Calu3 (cell line): ENCODE measurements at regions of chr1 and their contacts with region 1.

Region 1: GRCh38 chr1:231407547-231408396 is 14.3 kb downstream of the EGLN1 start:
- DNase-seq: no peak
- H3K4me3 Mint-ChIP-seq: no peak overlapping the region
- H3K27ac Mint-ChIP-seq: no peak overlapping the region
- H3K4me1 Mint-ChIP-seq: peaks cover 13% of the 10 kb centered on the region
- H3K27me3 Mint-ChIP-seq: no peaks in the 10 kb centered on the region
- CTCF ChIP-seq: no peak

Region 2: GRCh38 chr1:231395076-231395995 is 12.4 kb before region 1 on chr1:
- CTCF ChIA-PET with region 1: no interaction called
- intact Hi-C with region 1: loop called (anchors 2 kb)
- DNase-seq: peak; percentile 47
- H3K4me3 Mint-ChIP-seq: peak overlapping the region; percentile 50
- H3K27ac Mint-ChIP-seq: peak overlapping the region; percentile 78
- H3K4me1 Mint-ChIP-seq: peaks cover 82% of the 10 kb centered on the region
- H3K27me3 Mint-ChIP-seq: no peaks in the 10 kb centered on the region
- CTCF ChIP-seq: no peak

Region 3: GRCh38 chr1:231442735-231443134 is 35.0 kb after region 1 on chr1:
- CTCF ChIA-PET with region 1: no interaction called
- intact Hi-C with region 1: no loop called
- DNase-seq: no peak
- H3K4me3 Mint-ChIP-seq: no peak overlapping the region
- H3K27ac Mint-ChIP-seq: no peak overlapping the region
- H3K4me1 Mint-ChIP-seq: no peaks in the 10 kb centered on the region
- H3K27me3 Mint-ChIP-seq: no peaks in the 10 kb centered on the region
- CTCF ChIP-seq: no peak

Region 4: DNA sequence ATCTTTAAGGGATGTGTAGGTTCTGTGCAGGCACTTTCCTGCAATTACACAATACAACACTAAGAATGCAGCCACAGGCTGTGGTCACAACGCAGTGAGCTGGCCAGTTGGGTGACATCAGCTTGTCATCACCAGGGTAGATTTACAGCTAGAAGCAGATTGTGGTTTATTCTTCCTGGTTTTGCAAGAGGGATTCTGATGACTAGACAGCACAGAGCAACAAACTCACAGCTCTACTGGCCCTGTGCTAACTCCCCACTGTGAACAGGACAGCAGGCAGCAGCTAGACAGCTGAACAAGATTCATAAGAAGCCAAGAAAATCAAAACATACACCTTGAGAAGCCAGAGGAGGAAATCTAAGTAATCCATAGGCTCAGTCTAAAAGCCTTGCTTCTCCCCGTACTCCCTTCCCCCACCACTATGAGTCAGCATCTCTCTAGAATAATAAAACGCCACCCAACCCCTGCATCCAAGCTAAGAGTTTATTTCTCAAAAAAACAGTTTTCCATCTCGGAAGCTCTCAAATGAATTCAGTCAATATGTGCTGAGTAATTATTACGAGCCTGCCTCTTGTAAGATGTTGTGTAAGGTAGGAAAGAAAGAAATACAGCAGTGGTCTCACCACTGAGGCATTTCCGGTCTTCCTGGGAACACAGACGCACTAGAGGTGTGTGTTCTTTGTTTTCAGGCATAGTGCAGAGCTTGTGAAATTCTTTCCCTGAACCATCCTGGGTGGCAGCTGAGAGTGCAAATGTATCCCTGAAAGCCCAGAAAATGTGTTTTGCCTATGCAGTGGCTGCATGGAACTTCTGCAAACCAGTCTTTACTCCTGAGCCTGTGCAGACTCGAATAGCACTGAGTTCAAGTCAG is 1705.5 kb after region 1 on chr1:
- CTCF ChIA-PET with region 1: no interaction called
- intact Hi-C with region 1: loop called (anchors 5 kb)
- DNase-seq: peak; percentile 79
- H3K4me3 Mint-ChIP-seq: peak overlapping the region; percentile 69
- H3K27ac Mint-ChIP-seq: peak overlapping the region; percentile 84
- H3K4me1 Mint-ChIP-seq: peaks cover 37% of the 10 kb centered on the region
- H3K27me3 Mint-ChIP-seq: no peaks in the 10 kb centered on the region
- CTCF ChIP-seq: no peak